Naive thymus-derived CD8-positive, alpha-beta T cell (primary cell): ENCODE measurements at regions of chr1 and their contacts with region 1.

Region 1: GRCh38 chr1:173824331-173825081 is at the starts of genes CENPL and DARS2:
- DNase-seq: peak; percentile 74 to 94 (median 90)
- ATAC-seq: peak; percentile 89 to 91
- H3K4me3 Mint-ChIP-seq: peak within 1 kb of the TSS; percentile 91 to 99 (median 98)
- H3K27ac Mint-ChIP-seq: peak within 1 kb of the TSS; percentile 92 to 98 (median 96)
- H3K4me1 Mint-ChIP-seq: peaks cover 28 to 62% (median 50%) of the 10 kb centered on the region in 4 donors
- H3K27me3 Mint-ChIP-seq: no peaks in the 10 kb centered on the region
- polyA plus RNA-seq, gene CENPL: 4.4 to 9.2 (median 7.0) TPM
- polyA plus RNA-seq, gene DARS2: 6.7 to 12.1 (median 7.3) TPM

Region 2: DNA sequence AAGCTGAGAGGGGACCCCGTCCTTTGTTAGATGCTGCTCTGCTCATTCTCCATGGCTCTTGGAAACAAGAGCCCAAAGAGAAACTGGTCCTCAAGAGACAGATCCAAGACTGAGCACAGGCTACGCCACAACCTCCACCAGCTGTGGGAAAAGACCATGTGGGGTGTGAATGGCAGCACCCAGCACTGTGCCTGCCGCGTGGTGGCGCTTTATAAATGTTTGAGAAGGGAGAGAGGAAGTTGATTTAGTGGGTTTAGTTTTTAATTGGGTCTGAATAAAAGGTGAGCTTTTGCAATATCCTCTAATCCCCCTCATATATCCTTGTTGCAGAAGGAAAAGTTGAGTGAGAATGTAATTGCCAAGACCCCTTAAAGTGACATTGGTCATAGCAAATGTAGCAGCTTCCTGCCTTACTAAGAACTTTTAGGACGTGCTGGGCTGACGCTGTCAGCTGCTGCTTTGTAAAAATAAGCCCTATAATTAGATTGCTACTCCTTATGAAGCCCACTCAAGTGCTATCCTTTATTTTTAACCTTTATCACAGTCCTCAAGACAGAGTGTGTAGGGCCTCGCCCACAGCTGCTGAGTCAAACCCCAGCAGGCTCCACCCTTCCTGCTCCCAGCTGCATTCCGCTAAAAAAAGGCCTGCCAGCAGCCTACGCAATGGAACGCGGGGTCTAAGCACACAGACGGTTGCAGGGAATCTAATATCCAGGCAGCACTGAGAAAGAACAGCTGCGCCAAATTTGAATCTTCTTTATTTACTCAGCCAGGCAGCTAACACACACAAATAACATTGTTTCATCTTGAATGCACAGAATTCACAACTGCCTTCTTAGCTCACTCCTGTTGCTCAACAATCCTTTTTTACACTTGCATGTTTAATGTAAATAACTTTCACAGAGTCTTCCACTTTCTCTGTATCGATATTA is 394.8 kb before region 1 on chr1:
- POLR2A ChIA-PET with region 1: interaction called, 13 read pairs
- DNase-seq: peak; percentile 27 to 79 (median 58)
- ATAC-seq: peak; percentile 84 to 87
- H3K4me3 Mint-ChIP-seq: peak overlapping the region; percentile 8 to 65 (median 40)
- H3K27ac Mint-ChIP-seq: peak overlapping the region; percentile 48 to 79 (median 67)
- H3K4me1 Mint-ChIP-seq: peaks cover 13 to 32% (median 17%) of the 10 kb centered on the region in 4 donors
- H3K27me3 Mint-ChIP-seq: no peaks in the 10 kb centered on the region

Region 3: DNA sequence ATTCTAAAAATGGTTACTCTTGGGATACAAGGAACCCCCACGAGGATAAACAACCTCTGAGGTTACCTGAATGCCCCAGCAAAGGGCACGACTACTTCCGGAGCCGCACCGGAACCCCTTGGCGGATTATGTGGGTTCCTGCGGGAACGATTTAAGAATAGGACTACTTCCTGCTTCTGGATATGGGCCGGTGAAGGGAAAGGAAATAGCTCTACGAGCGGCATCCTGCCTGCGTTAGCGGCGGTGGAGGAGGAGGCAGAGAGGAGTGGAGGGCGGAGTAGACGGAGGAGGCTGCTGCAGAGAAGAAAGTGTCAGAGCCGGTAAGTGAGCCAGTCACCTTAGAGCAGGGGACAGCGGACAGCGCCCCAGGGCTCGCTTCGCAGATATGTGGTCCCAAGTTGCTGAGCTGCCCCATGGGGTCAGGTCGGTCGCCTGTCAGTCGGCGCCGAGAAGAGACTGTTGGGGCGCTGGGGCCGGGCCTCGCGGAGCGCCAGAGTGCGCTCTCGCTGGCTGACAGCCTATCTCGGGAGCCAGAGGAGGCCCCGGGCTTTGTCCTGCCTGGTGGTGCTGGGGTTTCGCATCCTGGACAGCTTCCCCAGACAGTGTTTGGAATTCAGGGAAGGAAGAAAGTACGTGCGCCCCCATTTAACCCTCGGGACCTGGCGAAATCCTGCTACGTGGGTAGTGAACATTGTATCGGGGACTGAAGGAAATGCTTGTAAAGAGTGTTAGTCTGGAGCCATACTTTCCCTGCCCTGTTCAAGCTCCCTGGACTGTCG is 109.6 kb before region 1 on chr1 and contains the start of gene KLHL20:
- POLR2A ChIA-PET with region 1: interaction called, 19 read pairs
- DNase-seq: peak; percentile 64 to 93 (median 88)
- ATAC-seq: peak; percentile 97
- H3K4me3 Mint-ChIP-seq: peak within 1 kb of the TSS; percentile 92 to 100 (median 98)
- H3K27ac Mint-ChIP-seq: peak within 1 kb of the TSS; percentile 92 to 98 (median 96)
- H3K4me1 Mint-ChIP-seq: peaks cover 9 to 37% (median 30%) of the 10 kb centered on the region in 4 donors
- H3K27me3 Mint-ChIP-seq: peaks cover 11 to 21% (median 13%) of the 10 kb centered on the region in 5 donors
- polyA plus RNA-seq, gene KLHL20: 21.1 to 27.1 (median 21.9) TPM

Region 4: DNA sequence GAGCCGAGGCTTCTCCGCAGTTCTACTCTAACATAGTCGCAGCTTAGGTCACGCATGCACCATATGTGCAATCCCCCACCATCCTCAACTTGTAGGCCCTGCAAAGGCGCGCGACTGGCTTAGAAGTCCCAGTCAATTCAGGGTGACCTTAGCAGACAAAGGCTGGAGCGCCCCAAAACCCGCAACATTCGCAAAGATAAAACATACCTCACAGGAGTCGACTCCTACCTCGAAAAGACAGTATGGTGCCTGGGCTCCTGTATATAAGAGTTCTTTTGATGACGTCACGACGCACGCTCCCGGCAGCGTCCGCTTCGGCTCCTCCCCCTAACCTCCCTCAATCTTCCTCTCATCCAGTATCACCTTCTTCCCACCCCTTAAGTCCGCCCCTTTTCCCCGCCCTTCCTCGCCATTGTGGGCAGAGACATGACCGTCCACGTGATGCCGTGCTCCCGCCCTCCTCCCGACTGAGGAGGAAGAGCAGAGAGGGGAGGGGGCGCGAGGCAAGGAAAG is 43.3 kb after region 1 on chr1 and contains the start of gene GAS5:
- POLR2A ChIA-PET with region 1: interaction called, 47 read pairs
- DNase-seq: peak; percentile 90 to 100 (median 99)
- ATAC-seq: peak; percentile 75 to 79
- H3K4me3 Mint-ChIP-seq: peak within 1 kb of the TSS; percentile 87 to 99 (median 97)
- H3K27ac Mint-ChIP-seq: peak within 1 kb of the TSS; percentile 95 to 99 (median 98)
- H3K4me1 Mint-ChIP-seq: peaks cover 29 to 82% (median 74%) of the 10 kb centered on the region in 4 donors
- H3K27me3 Mint-ChIP-seq: no peaks in the 10 kb centered on the region
- polyA plus RNA-seq, gene GAS5: 503 to 660 (median 547) TPM